ENCODE measurements at regions of chr6 and their contacts with region 1.

Region 1: DNA sequence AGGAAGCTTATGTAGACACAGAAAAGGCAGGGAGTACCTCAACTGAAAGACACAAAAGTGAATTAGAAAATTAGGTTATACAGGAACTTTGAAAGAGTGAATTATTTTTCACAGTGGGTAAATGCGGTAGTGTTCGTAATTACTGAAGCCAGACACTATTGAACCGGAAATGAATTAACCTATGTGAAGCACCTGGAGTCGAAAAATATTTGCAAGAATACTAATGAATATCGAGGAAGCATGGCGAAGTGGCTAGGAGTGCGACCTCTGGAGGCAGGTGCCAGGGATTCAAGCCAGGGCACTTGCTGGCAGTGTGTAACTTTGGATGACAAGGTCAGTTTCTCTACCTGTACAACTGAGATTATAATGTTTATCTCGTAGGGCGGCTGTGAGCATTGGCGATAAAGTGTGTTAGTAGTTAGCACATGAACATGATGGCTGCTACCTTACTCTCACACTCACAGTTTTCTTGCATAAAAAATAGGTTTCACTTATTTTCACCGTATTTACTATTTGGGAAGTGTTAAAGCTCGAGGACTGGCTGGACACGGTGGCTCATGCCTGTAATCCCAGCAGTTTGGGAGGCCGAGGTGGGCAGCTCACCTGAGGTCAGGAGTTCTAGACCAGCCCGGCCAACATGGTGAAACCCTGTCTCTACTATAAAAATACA is 567 bp upstream of the SLC18B1 start:
- DNase-seq: peak; percentile 75
- H3K4me3 ChIP-seq: peak overlapping the region; percentile 65 to 81 (median 77)
- H3K27ac ChIP-seq: peak overlapping the region in 1 of 4 donors; percentile 79
- H3K4me1 ChIP-seq: peaks cover 0 to 10% (median 8%) of the 10 kb centered on the region in 4 donors
- H3K27me3 ChIP-seq: no peaks in the 10 kb centered on the region
- CTCF ChIP-seq: peak in 3 of 4 experiments; percentile 34 to 59 (median 53)
- EP300 ChIP-seq: no peak
- POLR2A ChIP-seq: no peak

Region 2: GRCh38 chr6:132530293-132530974 is 268.6 kb before region 1 on chr6:
- intact Hi-C with region 1: loop called (anchors 10 kb)
- DNase-seq: peak; percentile 66
- H3K4me3 ChIP-seq: no peak overlapping the region
- H3K27ac ChIP-seq: no peak overlapping the region
- H3K4me1 ChIP-seq: no peaks in the 10 kb centered on the region
- H3K27me3 ChIP-seq: no peaks in the 10 kb centered on the region
- CTCF ChIP-seq: peak; percentile 53 to 89 (median 65)
- EP300 ChIP-seq: no peak
- POLR2A ChIP-seq: no peak

Region 3: DNA sequence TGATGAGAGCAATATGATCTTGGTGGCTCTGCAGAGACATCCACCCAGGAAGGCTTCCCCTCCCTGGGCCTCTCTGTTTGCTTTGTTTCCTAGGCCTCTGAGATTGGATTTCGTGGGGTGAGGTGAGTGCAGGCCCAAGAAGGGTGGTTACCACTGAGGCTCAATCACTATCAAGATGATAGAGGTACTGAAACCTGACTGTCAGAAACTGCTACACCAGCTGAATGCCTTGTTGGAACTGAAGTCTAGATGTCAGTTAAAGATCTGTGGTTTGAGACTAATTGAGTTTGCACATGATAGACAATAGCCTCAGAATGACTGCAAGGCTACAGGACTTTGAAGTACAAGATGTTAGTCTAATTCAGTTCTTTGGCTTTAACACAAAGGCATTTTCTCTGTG is 100.4 kb before region 1 on chr6:
- intact Hi-C with region 1: no loop called
- DNase-seq: no peak
- H3K4me3 ChIP-seq: no peak overlapping the region
- H3K27ac ChIP-seq: no peak overlapping the region
- H3K4me1 ChIP-seq: no peaks in the 10 kb centered on the region
- H3K27me3 ChIP-seq: no peaks in the 10 kb centered on the region
- CTCF ChIP-seq: no peak
- EP300 ChIP-seq: no peak
- POLR2A ChIP-seq: no peak

Region 4: GRCh38 chr6:132730560-132730959 is 68.4 kb before region 1 on chr6:
- intact Hi-C with region 1: no loop called
- DNase-seq: no peak
- H3K4me3 ChIP-seq: no peak overlapping the region
- H3K27ac ChIP-seq: no peak overlapping the region
- H3K4me1 ChIP-seq: peaks cover 0 to 6% (median 2%) of the 10 kb centered on the region in 4 donors
- H3K27me3 ChIP-seq: no peaks in the 10 kb centered on the region
- CTCF ChIP-seq: no peak
- EP300 ChIP-seq: no peak
- POLR2A ChIP-seq: no peak

Region 5: DNA sequence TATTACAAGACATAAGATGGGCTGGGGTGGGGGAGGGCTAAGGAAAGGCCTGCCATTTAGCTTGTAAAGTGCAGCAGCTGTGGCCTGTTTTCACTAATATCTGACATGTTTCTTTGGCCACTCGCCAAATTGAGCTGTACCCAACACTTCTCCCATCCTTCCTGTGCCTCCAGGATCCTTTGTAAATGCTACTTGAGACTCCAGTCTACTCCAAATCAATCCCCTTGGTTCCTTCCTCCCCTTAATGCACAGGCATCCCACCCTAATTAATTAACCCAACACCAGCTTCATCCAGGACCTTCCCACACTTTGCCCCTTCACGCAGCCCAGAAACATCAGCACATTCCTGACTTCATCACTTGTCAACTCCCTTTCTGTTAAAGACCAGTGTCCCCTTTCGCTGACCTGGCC is 1035.0 kb after region 1 on chr6:
- intact Hi-C with region 1: no loop called
- DNase-seq: no peak
- H3K4me3 ChIP-seq: no peak overlapping the region
- H3K27ac ChIP-seq: no peak overlapping the region
- H3K4me1 ChIP-seq: peaks cover 0 to 9% (median 3%) of the 10 kb centered on the region in 4 donors
- H3K27me3 ChIP-seq: peaks cover 0 to 15% (median 4%) of the 10 kb centered on the region in 3 donors
- CTCF ChIP-seq: no peak
- EP300 ChIP-seq: no peak
- POLR2A ChIP-seq: no peak

Measured in sigmoid colon (tissue), 7 donors.